Calu3 (cell line): ENCODE measurements at regions of chr3 and their contacts with region 1.

Region 1: GRCh38 chr3:149621218-149622005 is 36.4 kb downstream of the WWTR1 start:
- DNase-seq: peak; percentile 46
- H3K4me3 Mint-ChIP-seq: peak overlapping the region; percentile 33
- H3K27ac Mint-ChIP-seq: peak overlapping the region; percentile 67
- H3K4me1 Mint-ChIP-seq: peaks cover 85% of the 10 kb centered on the region
- H3K27me3 Mint-ChIP-seq: no peaks in the 10 kb centered on the region
- CTCF ChIP-seq: no peak

Region 2: GRCh38 chr3:148737104-148737530 is 884.3 kb before region 1 on chr3:
- CTCF ChIA-PET with region 1: no interaction called
- intact Hi-C with region 1: no loop called
- DNase-seq: no peak
- H3K4me3 Mint-ChIP-seq: no peak overlapping the region
- H3K27ac Mint-ChIP-seq: no peak overlapping the region
- H3K4me1 Mint-ChIP-seq: no peaks in the 10 kb centered on the region
- H3K27me3 Mint-ChIP-seq: no peaks in the 10 kb centered on the region
- CTCF ChIP-seq: no peak

Region 3: GRCh38 chr3:148991194-148992026 is 630.0 kb before region 1 on chr3 and contains the start of gene GYG1:
- CTCF ChIA-PET with region 1: no interaction called
- intact Hi-C with region 1: no loop called
- DNase-seq: peak; percentile 92
- H3K4me3 Mint-ChIP-seq: peak within 1 kb of the TSS; percentile 97
- H3K27ac Mint-ChIP-seq: peak within 1 kb of the TSS; percentile 67
- H3K4me1 Mint-ChIP-seq: peaks cover 17% of the 10 kb centered on the region
- H3K27me3 Mint-ChIP-seq: peaks cover 4% of the 10 kb centered on the region
- CTCF ChIP-seq: peak; percentile 65
- total RNA-seq, gene GYG1: 46.7 and 49.2 TPM in 2 replicates

Region 4: DNA sequence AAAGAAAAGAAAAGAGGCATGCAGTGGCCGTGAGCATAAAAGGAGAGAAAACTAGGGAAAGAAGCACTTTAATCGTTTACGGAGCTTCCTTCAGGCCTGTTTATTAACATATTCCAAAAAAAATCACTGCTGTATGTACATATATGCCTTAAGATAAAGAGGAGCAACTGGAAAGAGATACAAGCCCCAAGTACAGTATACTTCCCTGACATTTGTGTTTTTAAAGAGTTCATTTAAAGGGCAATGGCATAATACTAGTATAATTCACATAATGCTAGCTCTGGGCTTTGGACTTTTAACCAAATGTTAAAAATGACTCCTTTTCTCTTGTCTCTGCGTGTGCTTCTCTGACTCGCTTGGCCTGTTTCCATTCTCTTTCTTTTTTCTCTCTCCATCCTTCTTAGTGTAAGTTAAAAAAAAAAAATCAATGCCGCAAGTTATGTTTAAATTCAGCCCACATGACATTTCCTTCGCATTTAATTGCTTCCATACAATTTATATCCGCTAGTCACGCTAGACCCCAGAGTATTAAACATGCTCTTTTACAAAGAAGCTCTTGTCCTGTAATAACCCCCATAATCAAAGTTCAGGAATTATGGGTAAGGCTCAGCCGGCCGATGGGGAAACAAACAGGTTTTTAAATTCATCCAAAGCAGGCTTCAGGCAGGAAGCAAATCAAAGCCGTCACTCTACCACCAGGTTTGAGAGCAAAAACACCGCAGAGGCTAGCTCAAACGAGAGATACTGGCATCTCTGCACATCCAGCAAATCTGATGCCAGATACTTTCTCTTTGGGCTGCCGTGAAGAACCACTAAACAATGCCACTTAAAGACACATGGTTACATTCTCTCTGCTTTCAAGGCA is 17.0 kb after region 1 on chr3:
- CTCF ChIA-PET with region 1: interaction called, 12 read pairs
- intact Hi-C with region 1: loop called (anchors 2 kb)
- DNase-seq: peak; percentile 65
- H3K4me3 Mint-ChIP-seq: peak overlapping the region; percentile 60
- H3K27ac Mint-ChIP-seq: peak overlapping the region; percentile 78
- H3K4me1 Mint-ChIP-seq: peaks cover 86% of the 10 kb centered on the region
- H3K27me3 Mint-ChIP-seq: no peaks in the 10 kb centered on the region
- CTCF ChIP-seq: no peak

Region 5: GRCh38 chr3:149670742-149671492 is 49.5 kb after region 1 on chr3:
- CTCF ChIA-PET with region 1: no interaction called
- intact Hi-C with region 1: no loop called
- DNase-seq: no peak
- H3K4me3 Mint-ChIP-seq: no peak overlapping the region
- H3K27ac Mint-ChIP-seq: no peak overlapping the region
- H3K4me1 Mint-ChIP-seq: no peaks in the 10 kb centered on the region
- H3K27me3 Mint-ChIP-seq: no peaks in the 10 kb centered on the region
- CTCF ChIP-seq: no peak

Region 6: GRCh38 chr3:149796026-149796425 is 174.6 kb after region 1 on chr3:
- CTCF ChIA-PET with region 1: no interaction called
- intact Hi-C with region 1: no loop called
- DNase-seq: no peak
- H3K4me3 Mint-ChIP-seq: no peak overlapping the region
- H3K27ac Mint-ChIP-seq: no peak overlapping the region
- H3K4me1 Mint-ChIP-seq: peaks cover 13% of the 10 kb centered on the region
- H3K27me3 Mint-ChIP-seq: no peaks in the 10 kb centered on the region
- CTCF ChIP-seq: no peak